MCF 10A (cell line): ENCODE measurements at regions of chr1 and their contacts with region 1.

Region 1: GRCh38 chr1:116511459-116512019 is 59.3 kb downstream of the CD58 start:
- DNase-seq: no peak
- H3K4me3 Mint-ChIP-seq: no peak overlapping the region
- H3K27ac Mint-ChIP-seq: peak overlapping the region; percentile 5
- H3K4me1 Mint-ChIP-seq: peaks cover 48% of the 10 kb centered on the region
- H3K27me3 Mint-ChIP-seq: no peaks in the 10 kb centered on the region
- CTCF ChIP-seq: no peak

Region 2: GRCh38 chr1:116498789-116499628 is 12.5 kb before region 1 on chr1:
- CTCF ChIA-PET with region 1: interaction called, 13 read pairs
- POLR2A ChIA-PET with region 1: no interaction called
- intact Hi-C with region 1: no loop called
- DNase-seq: peak; percentile 73
- H3K4me3 Mint-ChIP-seq: no peak overlapping the region
- H3K27ac Mint-ChIP-seq: no peak overlapping the region
- H3K4me1 Mint-ChIP-seq: peaks cover 17% of the 10 kb centered on the region
- H3K27me3 Mint-ChIP-seq: no peaks in the 10 kb centered on the region
- CTCF ChIP-seq: peak; percentile 86

Region 3: DNA sequence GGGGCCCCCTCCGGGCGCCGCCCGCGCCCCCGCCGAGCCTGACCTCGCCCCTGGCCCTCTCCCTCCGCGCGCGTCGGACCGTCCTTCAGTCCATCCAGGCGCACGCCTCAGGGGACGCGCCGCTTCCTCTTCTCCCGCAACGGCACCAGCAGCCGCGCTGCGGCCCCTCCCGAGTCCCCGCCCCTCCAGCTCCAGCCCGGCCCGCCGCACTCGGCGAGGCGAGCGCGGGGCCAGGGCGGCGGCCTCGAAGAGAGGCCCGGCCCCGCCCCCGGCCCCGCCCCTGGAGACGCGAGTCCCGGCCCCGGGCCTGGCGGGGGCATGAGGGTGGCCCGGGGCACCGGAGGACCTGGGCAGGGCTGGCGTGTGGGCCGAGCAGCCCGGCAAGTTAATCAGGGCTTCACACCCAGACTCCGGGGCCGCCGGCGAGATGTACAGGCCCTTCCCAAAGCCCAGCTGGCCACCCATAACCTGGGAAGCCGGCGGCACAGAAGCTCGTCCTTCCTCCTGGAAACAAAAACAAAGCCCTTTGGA is 156.1 kb after region 1 on chr1 and contains the start of gene IGSF3:
- CTCF ChIA-PET with region 1: no interaction called
- POLR2A ChIA-PET with region 1: no interaction called
- intact Hi-C with region 1: no loop called
- DNase-seq: peak; percentile 76
- H3K4me3 Mint-ChIP-seq: peak within 1 kb of the TSS; percentile 68
- H3K27ac Mint-ChIP-seq: no peak within 1 kb of the TSS
- H3K4me1 Mint-ChIP-seq: no peaks in the 10 kb centered on the region
- H3K27me3 Mint-ChIP-seq: no peaks in the 10 kb centered on the region
- CTCF ChIP-seq: no peak
- total RNA-seq, gene IGSF3: 3.5 and 4.6 TPM in 2 replicates